ENCODE measurements at regions of chr16 and their contacts with region 1.

Region 1: GRCh38 chr16:50024684-50025536 is at the start of gene CNEP1R1:
- DNase-seq: peak; percentile 94 to 96 (median 96)
- ATAC-seq: peak; percentile 100
- H3K4me3 ChIP-seq: peak within 1 kb of the TSS; percentile 88
- H3K4me1 ChIP-seq: peaks cover 17% of the 10 kb centered on the region
- CTCF ChIP-seq: peak; percentile 100
- total RNA-seq, gene CNEP1R1: 19.3 to 20.8 (median 20.3) TPM

Region 2: GRCh38 chr16:50665128-50665878 is 640.4 kb after region 1 on chr16:
- intact Hi-C with region 1: loop called in 1 of 2 experiments (anchors 5 kb)
- DNase-seq: peak; percentile 75 to 89 (median 85)
- ATAC-seq: peak; percentile 84
- H3K4me3 ChIP-seq: no peak overlapping the region
- H3K4me1 ChIP-seq: no peaks in the 10 kb centered on the region
- CTCF ChIP-seq: peak; percentile 85

Measured in mucosa of descending colon (tissue), 3 donors.